Naive thymus-derived CD4-positive, alpha-beta T cell (primary cell): ENCODE measurements at regions of chr6 and their contacts with region 1.

Region 1: DNA sequence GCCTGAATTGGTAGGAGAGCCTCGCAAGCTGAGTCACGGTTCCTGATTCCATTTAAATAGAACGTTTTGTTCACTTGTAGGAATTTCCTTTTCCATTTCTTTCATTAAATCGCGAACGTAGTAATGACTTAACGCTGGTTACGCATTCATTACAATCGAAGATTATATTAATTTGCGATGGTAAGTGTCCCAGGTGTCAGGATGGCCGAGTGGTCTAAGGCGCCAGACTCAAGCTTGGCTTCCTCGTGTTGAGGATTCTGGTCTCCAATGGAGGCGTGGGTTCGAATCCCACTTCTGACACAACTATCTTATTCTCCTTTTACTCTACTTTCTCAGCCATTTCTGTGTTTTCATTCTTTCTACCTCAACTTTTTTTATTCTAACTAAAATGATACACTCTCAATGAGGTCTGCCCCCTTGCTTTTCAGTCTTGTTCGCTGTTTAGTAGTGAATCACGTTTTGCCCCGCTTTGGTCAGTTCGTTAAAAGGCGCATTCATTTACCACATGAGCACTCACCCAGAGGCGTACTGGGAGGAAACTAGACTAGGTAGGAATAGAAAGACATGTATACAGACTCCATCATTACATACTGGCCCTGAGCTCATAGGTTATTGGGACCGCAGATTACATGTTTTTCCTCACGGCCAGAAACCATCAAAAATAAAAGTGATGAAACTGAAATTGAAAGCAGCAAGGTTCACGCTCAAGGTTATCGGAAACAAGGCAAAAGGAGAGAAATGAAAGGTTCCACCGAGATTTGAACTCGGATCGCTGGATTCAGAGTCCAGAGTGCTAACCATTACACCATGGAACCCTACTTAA is 17.3 kb upstream of the TRIM27 start:
- DNase-seq: peak; percentile 35 to 90 (median 83)
- ATAC-seq: peak; percentile 76
- H3K4me3 ChIP-seq: peak overlapping the region; percentile 82
- H3K4me3 Mint-ChIP-seq: peak overlapping the region; percentile 86 to 99 (median 92)
- H3K27ac ChIP-seq: peak overlapping the region; percentile 60
- H3K27ac Mint-ChIP-seq: peak overlapping the region; percentile 90 to 99 (median 94)
- H3K4me1 ChIP-seq: peaks cover 22 to 30% of the 10 kb centered on the region in 2 donors
- H3K4me1 Mint-ChIP-seq: peaks cover 34 to 64% (median 56%) of the 10 kb centered on the region in 7 donors
- H3K27me3 ChIP-seq: no peaks in the 10 kb centered on the region
- H3K27me3 Mint-ChIP-seq: peaks cover 0 to 6% (median 0%) of the 10 kb centered on the region in 5 donors

Region 2: GRCh38 chr6:27503436-27504030 is 1437.5 kb before region 1 on chr6:
- CTCF ChIA-PET with region 1: no interaction called
- POLR2A ChIA-PET with region 1: no interaction called
- intact Hi-C with region 1: loop called in 1 of 2 experiments (anchors 1 kb)
- DNase-seq: peak; percentile 73 to 86 (median 80)
- ATAC-seq: peak; percentile 75
- H3K4me3 ChIP-seq: peak overlapping the region; percentile 61
- H3K4me3 Mint-ChIP-seq: peak overlapping the region; percentile 85 to 99 (median 91)
- H3K27ac ChIP-seq: peak overlapping the region; percentile 57
- H3K27ac Mint-ChIP-seq: peak overlapping the region; percentile 82 to 97 (median 91)
- H3K4me1 ChIP-seq: peaks cover 6% of the 10 kb centered on the region in 2 donors
- H3K4me1 Mint-ChIP-seq: peaks cover 15 to 41% (median 36%) of the 10 kb centered on the region in 7 donors
- H3K27me3 ChIP-seq: no peaks in the 10 kb centered on the region
- H3K27me3 Mint-ChIP-seq: peaks cover 5 to 62% (median 11%) of the 10 kb centered on the region in 5 donors

Region 3: DNA sequence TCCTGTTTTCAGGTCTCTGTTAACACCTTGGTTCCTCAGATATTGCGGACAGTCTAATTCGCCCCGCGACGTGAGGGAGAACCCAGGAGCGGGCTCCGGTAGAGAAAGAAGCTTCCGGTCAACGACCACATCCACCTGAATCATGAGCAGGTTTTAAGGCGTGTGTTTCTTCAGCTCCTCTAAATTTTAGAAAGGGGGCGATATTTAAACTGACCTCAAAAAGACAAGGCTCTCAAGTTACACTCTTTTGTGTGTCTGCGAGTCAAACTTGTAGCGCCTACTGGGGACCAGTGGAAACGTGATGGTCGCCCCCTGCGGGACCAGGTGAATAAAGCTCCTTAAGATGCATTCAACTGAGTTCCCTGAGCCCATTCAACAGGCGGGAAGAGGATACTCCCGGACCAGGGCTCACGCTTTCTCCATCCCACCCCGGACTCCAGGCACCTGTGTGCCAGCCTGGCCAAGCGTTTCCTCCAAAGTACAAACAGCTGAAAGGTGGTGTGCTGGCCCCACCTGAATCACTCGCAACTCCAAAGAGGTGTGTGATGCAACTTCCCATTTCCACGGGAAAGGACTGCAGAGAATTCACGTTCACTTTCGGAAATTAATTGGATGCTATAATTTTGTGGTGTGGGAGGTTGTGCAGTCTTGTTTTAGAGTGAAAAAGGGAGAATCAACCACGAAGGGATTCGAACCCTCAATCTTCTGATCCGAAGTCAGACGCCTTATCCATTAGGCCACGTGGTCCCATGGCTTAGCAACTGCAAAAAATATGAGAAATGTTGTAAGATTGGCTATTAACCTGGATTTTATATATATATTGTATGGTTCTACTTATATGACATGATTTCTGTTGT is 398.4 kb before region 1 on chr6:
- CTCF ChIA-PET with region 1: no interaction called
- POLR2A ChIA-PET with region 1: no interaction called
- intact Hi-C with region 1: loop called in 1 of 2 experiments (anchors 2 kb)
- DNase-seq: peak; percentile 25 to 76 (median 68)
- ATAC-seq: peak; percentile 75
- H3K4me3 ChIP-seq: peak overlapping the region; percentile 62
- H3K4me3 Mint-ChIP-seq: peak overlapping the region; percentile 79 to 94 (median 88)
- H3K27ac ChIP-seq: no peak overlapping the region
- H3K27ac Mint-ChIP-seq: peak overlapping the region; percentile 26 to 92 (median 85)
- H3K4me1 ChIP-seq: peaks cover 0 to 12% of the 10 kb centered on the region in 2 donors
- H3K4me1 Mint-ChIP-seq: peaks cover 15 to 46% (median 37%) of the 10 kb centered on the region in 7 donors
- H3K27me3 ChIP-seq: peaks cover 0 to 11% of the 10 kb centered on the region in 2 donors
- H3K27me3 Mint-ChIP-seq: peaks cover 0 to 84% (median 51%) of the 10 kb centered on the region in 5 donors

Region 4: GRCh38 chr6:28863604-28864320 is 77.3 kb before region 1 on chr6:
- CTCF ChIA-PET with region 1: interaction called, 4 read pairs
- POLR2A ChIA-PET with region 1: interaction called, 27 read pairs
- intact Hi-C with region 1: loop called (anchors 1 kb)
- DNase-seq: peak; percentile 60 to 93 (median 89)
- ATAC-seq: peak; percentile 64
- H3K4me3 ChIP-seq: peak overlapping the region; percentile 95
- H3K4me3 Mint-ChIP-seq: peak overlapping the region; percentile 90 to 98 (median 92)
- H3K27ac ChIP-seq: peak overlapping the region; percentile 75
- H3K27ac Mint-ChIP-seq: peak overlapping the region; percentile 89 to 100 (median 95)
- H3K4me1 ChIP-seq: peaks cover 11 to 18% of the 10 kb centered on the region in 2 donors
- H3K4me1 Mint-ChIP-seq: peaks cover 15 to 69% (median 53%) of the 10 kb centered on the region in 7 donors
- H3K27me3 ChIP-seq: no peaks in the 10 kb centered on the region
- H3K27me3 Mint-ChIP-seq: peaks cover 0 to 30% (median 4%) of the 10 kb centered on the region in 5 donors

Region 5: GRCh38 chr6:28895134-28895812 is 45.8 kb before region 1 on chr6:
- CTCF ChIA-PET with region 1: interaction called, 4 read pairs
- POLR2A ChIA-PET with region 1: interaction called, 22 read pairs
- intact Hi-C with region 1: loop called (anchors 1 kb)
- DNase-seq: peak; percentile 72 to 95 (median 91)
- ATAC-seq: peak; percentile 83
- H3K4me3 ChIP-seq: peak overlapping the region; percentile 82
- H3K4me3 Mint-ChIP-seq: peak overlapping the region; percentile 92 to 100 (median 98)
- H3K27ac ChIP-seq: peak overlapping the region; percentile 99
- H3K27ac Mint-ChIP-seq: peak overlapping the region; percentile 98 to 100 (median 100)
- H3K4me1 ChIP-seq: peaks cover 5 to 6% of the 10 kb centered on the region in 2 donors
- H3K4me1 Mint-ChIP-seq: peaks cover 0 to 32% (median 14%) of the 10 kb centered on the region in 7 donors
- H3K27me3 ChIP-seq: no peaks in the 10 kb centered on the region
- H3K27me3 Mint-ChIP-seq: peaks cover 0 to 15% (median 0%) of the 10 kb centered on the region in 5 donors

Region 6: DNA sequence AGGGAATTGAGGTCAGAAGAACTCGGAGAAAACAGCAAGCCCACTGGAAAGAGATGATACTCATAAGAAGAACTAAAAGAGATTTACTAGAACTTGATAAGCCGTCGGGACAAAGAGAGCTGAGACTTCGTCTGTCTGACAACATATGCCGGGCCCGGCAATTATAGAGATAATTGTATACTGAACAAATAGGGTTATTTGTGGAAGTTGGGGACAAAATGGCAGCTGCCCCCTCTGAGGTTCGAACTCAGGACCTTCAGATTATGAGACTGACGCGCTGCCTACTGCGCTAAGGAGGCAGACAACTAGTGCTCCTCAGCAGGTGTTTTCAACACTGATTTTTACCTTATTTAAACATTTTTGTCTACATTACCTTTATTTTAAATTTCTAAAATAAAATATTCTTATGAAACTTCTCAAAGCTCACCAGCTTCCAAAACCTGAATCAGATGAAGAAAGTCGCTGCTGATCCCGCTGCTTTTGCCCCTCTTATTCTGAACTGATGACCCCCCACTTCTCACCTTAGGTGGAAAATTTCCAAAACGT is 12.0 kb after region 1 on chr6:
- CTCF ChIA-PET with region 1: no interaction called
- POLR2A ChIA-PET with region 1: interaction called, 3 read pairs
- intact Hi-C with region 1: loop called (anchors 1 kb)
- DNase-seq: peak; percentile 18 to 70 (median 62)
- ATAC-seq: peak; percentile 55
- H3K4me3 ChIP-seq: peak overlapping the region; percentile 58
- H3K4me3 Mint-ChIP-seq: peak overlapping the region; percentile 63 to 92 (median 86)
- H3K27ac ChIP-seq: no peak overlapping the region
- H3K27ac Mint-ChIP-seq: peak overlapping the region; percentile 6 to 88 (median 77)
- H3K4me1 ChIP-seq: peaks cover 3 to 7% of the 10 kb centered on the region in 2 donors
- H3K4me1 Mint-ChIP-seq: peaks cover 0 to 30% (median 19%) of the 10 kb centered on the region in 7 donors
- H3K27me3 ChIP-seq: no peaks in the 10 kb centered on the region
- H3K27me3 Mint-ChIP-seq: peaks cover 0 to 32% (median 6%) of the 10 kb centered on the region in 5 donors

Region 7: GRCh38 chr6:29016559-29017427 is 75.7 kb after region 1 on chr6:
- CTCF ChIA-PET with region 1: interaction called, 4 read pairs
- POLR2A ChIA-PET with region 1: interaction called, 4 read pairs
- intact Hi-C with region 1: loop called (anchors 1 kb)
- DNase-seq: peak; percentile 58 to 81 (median 76)
- ATAC-seq: peak; percentile 88
- H3K4me3 ChIP-seq: peak overlapping the region; percentile 87
- H3K4me3 Mint-ChIP-seq: peak overlapping the region; percentile 83 to 94 (median 92)
- H3K27ac ChIP-seq: peak overlapping the region; percentile 40
- H3K27ac Mint-ChIP-seq: peak overlapping the region; percentile 44 to 87 (median 82)
- H3K4me1 ChIP-seq: peaks cover 3 to 5% of the 10 kb centered on the region in 2 donors
- H3K4me1 Mint-ChIP-seq: peaks cover 13 to 22% (median 19%) of the 10 kb centered on the region in 7 donors
- H3K27me3 ChIP-seq: no peaks in the 10 kb centered on the region
- H3K27me3 Mint-ChIP-seq: peaks cover 4 to 33% (median 17%) of the 10 kb centered on the region in 5 donors